ENCODE measurements at regions of chr5 and their contacts with region 1.

Region 1: GRCh38 chr5:103498211-103498610 is 64.4 kb downstream of the NUDT12 start:
- DNase-seq: no peak
- ATAC-seq: peak; percentile 60
- H3K4me3 Mint-ChIP-seq: peak overlapping the region; percentile 52
- H3K27ac Mint-ChIP-seq: peak overlapping the region; percentile 92
- H3K4me1 Mint-ChIP-seq: peaks cover 43% of the 10 kb centered on the region
- H3K27me3 Mint-ChIP-seq: no peaks in the 10 kb centered on the region
- CTCF ChIP-seq: no peak

Region 2: GRCh38 chr5:103519550-103519949 is 21.3 kb after region 1 on chr5:
- CTCF ChIA-PET with region 1: interaction called, 25 read pairs
- POLR2A ChIA-PET with region 1: no interaction called
- DNase-seq: peak; percentile 27
- ATAC-seq: peak; percentile 83
- H3K4me3 Mint-ChIP-seq: no peak overlapping the region
- H3K27ac Mint-ChIP-seq: no peak overlapping the region
- H3K4me1 Mint-ChIP-seq: peaks cover 10% of the 10 kb centered on the region
- H3K27me3 Mint-ChIP-seq: no peaks in the 10 kb centered on the region
- CTCF ChIP-seq: peak; percentile 14; the same call in 1 of the 2 replicates